PC-3 (cell line): ENCODE measurements at regions of chr11 and their contacts with region 1.

Region 1: GRCh38 chr11:108008656-108009496 is at the start of gene CUL5:
- DNase-seq: peak; percentile 96
- ATAC-seq: peak; percentile 84
- H3K4me3 ChIP-seq: peak within 1 kb of the TSS; percentile 93
- H3K27ac ChIP-seq: peak within 1 kb of the TSS; percentile 82
- H3K4me1 ChIP-seq: peaks cover 23% of the 10 kb centered on the region; the same call in 1 of the 2 replicates
- H3K27me3 ChIP-seq: no peaks in the 10 kb centered on the region
- CTCF ChIP-seq: peak; percentile 91
- total RNA-seq, gene CUL5: 32.1 and 37.0 TPM in 2 replicates

Region 2: GRCh38 chr11:106950067-106950491 is 1058.8 kb before region 1 on chr11:
- CTCF ChIA-PET with region 1: no interaction called
- POLR2A ChIA-PET with region 1: no interaction called
- intact Hi-C with region 1: no loop called
- DNase-seq: no peak
- ATAC-seq: no peak
- H3K4me3 ChIP-seq: no peak overlapping the region
- H3K27ac ChIP-seq: no peak overlapping the region
- H3K4me1 ChIP-seq: no peaks in the 10 kb centered on the region
- H3K27me3 ChIP-seq: 0 out of 2 replicates have a peak, but pooled peaks cover 6% of the 10 kb centered on the region
- CTCF ChIP-seq: no peak

Region 3: DNA sequence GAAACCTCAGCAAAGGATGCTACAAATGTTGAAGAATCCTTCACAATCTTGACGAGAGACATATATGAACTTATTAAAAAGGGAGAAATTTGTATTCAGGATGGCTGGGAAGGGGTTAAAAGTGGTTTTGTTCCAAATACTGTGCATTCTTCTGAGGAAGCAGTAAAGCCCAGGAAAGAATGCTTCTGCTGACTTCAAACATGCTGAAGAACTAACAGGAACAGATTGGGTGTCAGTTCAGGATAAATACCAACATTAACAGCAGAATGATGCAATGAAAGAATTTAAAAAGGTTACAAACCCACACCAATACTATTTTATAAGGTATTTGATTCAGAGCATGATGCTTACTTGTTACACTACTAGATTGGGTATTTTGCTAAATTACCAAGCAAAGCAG is 46.7 kb before region 1 on chr11:
- CTCF ChIA-PET with region 1: no interaction called
- POLR2A ChIA-PET with region 1: no interaction called
- intact Hi-C with region 1: no loop called
- DNase-seq: no peak
- ATAC-seq: no peak
- H3K4me3 ChIP-seq: no peak overlapping the region
- H3K27ac ChIP-seq: no peak overlapping the region
- H3K4me1 ChIP-seq: no peaks in the 10 kb centered on the region
- H3K27me3 ChIP-seq: peaks cover 76% of the 10 kb centered on the region
- CTCF ChIP-seq: no peak

Region 4: DNA sequence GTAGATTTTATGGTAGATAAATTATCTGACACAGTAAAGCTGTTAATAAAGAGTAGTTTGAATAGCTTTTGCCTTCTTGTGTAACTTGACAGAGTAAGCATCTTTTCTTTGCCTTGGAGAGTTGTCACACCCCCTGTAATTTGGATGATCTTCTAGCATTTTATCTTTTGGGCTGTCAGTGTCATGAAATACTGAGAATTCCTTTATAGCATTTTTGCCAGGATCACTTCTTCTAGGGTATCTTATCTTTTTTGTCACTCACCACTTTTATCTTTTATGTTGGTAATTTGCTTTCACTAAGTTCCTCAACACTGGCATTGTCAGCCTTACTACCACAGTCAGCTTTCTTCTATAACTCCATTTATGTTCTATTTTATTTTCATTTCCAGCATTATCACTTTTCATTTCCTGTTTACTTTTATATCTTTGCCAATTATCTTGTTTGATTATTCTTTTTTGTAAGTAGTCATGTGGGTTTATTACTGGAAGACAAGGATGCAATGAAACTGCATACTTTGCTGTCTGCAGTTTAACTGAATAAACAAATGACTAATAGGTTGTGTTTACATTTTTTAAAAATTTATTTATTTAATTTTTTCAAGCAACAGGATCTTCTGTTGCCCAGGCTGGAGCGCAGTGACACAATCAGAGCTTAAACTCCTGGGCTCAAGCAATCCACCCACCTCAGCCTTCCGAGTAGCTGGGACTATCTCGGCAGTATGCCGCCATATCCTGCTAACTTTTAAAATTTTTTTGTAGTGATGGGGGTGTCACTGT is 84.4 kb after region 1 on chr11:
- CTCF ChIA-PET with region 1: no interaction called
- POLR2A ChIA-PET with region 1: no interaction called
- intact Hi-C with region 1: loop called (anchors 2 kb)
- DNase-seq: peak; percentile 53
- ATAC-seq: peak; percentile 89
- H3K4me3 ChIP-seq: no peak overlapping the region
- H3K27ac ChIP-seq: peak overlapping the region; percentile 1; the same call in 1 of the 2 replicates
- H3K4me1 ChIP-seq: peaks cover 10% of the 10 kb centered on the region
- H3K27me3 ChIP-seq: no peaks in the 10 kb centered on the region
- CTCF ChIP-seq: no peak

Region 5: DNA sequence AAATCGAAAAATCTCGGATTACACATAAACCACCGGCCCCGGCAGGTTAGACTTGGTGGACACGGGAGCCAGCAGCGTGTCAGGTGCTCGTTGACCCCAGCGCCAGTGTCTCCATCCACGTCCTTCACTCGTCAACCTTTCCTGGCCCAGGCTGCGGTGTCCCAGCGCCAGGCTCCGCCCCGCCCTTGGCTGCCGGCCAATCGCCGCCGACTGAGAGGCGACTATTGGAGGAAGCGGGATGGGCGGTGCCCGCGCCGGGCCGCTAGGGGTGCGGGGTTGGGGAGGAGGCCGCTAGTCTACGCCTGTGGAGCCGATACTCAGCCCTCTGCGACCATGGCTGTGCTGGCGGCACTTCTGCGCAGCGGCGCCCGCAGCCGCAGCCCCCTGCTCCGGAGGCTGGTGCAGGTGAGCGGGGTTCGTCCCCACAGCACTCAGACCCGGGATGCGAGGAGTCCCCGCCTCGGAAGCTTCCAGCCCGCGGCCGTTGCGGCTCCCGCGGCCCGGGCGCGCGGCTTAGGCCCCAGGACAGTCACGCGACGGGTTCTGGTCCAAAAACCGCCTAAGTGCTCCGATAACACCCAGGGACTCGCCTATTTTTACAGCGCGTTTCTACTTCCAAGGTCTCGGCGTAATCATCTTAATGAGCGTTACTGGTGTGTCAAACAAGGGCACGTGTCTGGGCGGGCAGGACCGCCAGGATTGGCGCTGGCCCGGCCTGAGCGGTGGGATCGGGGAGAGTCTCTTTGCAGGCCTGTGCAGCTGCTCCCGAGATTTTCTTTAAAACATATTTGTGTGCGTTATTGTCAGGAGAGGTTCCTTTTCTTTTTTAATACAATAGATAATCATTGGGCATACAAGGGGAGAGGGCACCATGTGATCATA is 112.6 kb after region 1 on chr11 and contains the start of gene ACAT1:
- CTCF ChIA-PET with region 1: interaction called, 4 read pairs
- POLR2A ChIA-PET with region 1: no interaction called
- intact Hi-C with region 1: loop called (anchors 1 kb)
- DNase-seq: peak; percentile 98
- ATAC-seq: peak; percentile 96
- H3K4me3 ChIP-seq: peak within 1 kb of the TSS; percentile 74
- H3K27ac ChIP-seq: peak within 1 kb of the TSS; percentile 21
- H3K4me1 ChIP-seq: peaks cover 24% of the 10 kb centered on the region
- H3K27me3 ChIP-seq: no peaks in the 10 kb centered on the region
- CTCF ChIP-seq: no peak
- total RNA-seq, gene ACAT1: 180 and 212 TPM in 2 replicates

Region 6: GRCh38 chr11:109454857-109455256 is 1446.0 kb after region 1 on chr11:
- CTCF ChIA-PET with region 1: no interaction called
- POLR2A ChIA-PET with region 1: no interaction called
- intact Hi-C with region 1: no loop called
- DNase-seq: no peak
- ATAC-seq: no peak
- H3K4me3 ChIP-seq: no peak overlapping the region
- H3K27ac ChIP-seq: no peak overlapping the region
- H3K4me1 ChIP-seq: no peaks in the 10 kb centered on the region
- H3K27me3 ChIP-seq: peaks cover 31% of the 10 kb centered on the region
- CTCF ChIP-seq: no peak